ENCODE measurements at regions of chr10 and their contacts with region 1.

Region 1: DNA sequence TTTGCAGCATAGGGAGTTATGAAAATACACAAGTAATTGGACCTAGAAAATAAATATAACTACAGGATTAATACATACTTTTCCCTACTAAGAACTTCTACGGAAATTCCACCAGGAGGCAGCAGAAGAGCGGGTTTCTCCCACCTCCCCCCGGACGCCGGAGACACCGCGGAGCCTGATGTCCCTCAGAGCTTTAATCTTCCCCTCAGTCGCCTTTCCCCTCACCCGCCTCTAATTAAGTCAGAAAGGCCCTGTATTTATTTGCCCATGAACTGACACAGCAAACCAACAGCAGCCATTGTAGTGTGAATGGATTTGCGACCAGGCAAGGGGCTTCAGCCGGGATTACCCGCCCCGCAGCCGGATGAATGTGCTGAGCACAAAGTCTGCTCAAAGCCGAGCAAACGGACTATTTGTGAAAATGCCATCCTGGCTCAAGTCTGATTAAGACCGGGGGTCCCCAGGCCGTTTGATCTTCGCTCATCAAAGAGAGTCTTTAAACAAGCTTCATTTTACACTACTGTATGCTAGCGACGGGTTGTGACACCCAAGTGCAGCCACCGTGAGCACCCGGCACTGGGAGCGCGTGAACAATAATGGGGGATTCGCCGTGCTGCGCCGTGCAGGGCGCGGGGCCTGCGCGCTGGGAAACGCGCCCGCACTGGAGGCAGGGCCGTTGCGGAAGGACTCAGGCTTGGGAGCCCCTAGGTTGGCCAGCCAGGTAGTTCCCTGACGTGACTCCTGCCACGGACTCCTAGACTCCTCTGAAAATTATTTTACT is 5.6 kb upstream of the DKK1 start:
- DNase-seq: peak; percentile 35 to 66 (median 61)
- H3K4me3 ChIP-seq: peak overlapping the region in 2 of 4 donors; percentile 17 to 55
- H3K27ac ChIP-seq: no peak overlapping the region
- H3K4me1 ChIP-seq: peaks cover 0 to 11% of the 10 kb centered on the region in 2 donors
- H3K27me3 ChIP-seq: peaks cover 11% of the 10 kb centered on the region
- CTCF ChIP-seq: peak; percentile 54 to 80 (median 72)
- POLR2A ChIP-seq: no peak

Region 2: DNA sequence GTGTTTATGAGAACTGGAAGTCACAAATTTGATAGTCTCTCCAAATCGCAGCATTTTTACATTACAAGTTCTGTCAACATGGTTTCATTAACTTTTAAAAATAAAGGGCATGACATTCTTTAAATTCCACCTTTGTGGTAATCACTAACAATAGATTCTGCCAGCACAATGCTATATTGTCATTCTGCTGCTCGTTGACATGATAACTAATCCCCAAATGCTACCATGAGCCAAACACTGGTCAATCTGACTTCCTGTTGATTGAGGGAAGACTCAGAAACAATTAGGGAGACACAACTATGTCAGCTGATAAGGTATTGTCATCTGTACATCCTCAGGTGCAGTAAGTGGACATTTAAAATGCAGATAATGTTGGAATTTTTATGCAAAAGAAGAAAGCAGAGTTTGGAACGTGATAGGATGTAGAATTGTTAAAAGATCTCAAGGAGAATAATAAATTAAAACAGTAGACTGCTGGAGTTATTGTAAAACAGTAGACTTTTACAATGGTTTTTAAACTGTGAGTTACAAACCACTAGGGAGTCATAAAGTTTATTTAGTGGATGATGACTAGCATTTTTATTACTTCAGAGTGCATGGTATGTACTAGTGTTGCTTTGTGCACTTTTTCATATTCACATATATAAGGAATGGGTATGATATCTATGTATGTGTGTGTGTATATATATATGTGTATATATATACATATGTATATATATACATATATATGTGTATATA is 120.8 kb before region 1 on chr10:
- intact Hi-C with region 1: no loop called
- DNase-seq: no peak
- H3K4me3 ChIP-seq: no peak overlapping the region
- H3K27ac ChIP-seq: no peak overlapping the region
- H3K4me1 ChIP-seq: no peaks in the 10 kb centered on the region
- H3K27me3 ChIP-seq: no peaks in the 10 kb centered on the region
- CTCF ChIP-seq: no peak
- POLR2A ChIP-seq: no peak

Region 3: DNA sequence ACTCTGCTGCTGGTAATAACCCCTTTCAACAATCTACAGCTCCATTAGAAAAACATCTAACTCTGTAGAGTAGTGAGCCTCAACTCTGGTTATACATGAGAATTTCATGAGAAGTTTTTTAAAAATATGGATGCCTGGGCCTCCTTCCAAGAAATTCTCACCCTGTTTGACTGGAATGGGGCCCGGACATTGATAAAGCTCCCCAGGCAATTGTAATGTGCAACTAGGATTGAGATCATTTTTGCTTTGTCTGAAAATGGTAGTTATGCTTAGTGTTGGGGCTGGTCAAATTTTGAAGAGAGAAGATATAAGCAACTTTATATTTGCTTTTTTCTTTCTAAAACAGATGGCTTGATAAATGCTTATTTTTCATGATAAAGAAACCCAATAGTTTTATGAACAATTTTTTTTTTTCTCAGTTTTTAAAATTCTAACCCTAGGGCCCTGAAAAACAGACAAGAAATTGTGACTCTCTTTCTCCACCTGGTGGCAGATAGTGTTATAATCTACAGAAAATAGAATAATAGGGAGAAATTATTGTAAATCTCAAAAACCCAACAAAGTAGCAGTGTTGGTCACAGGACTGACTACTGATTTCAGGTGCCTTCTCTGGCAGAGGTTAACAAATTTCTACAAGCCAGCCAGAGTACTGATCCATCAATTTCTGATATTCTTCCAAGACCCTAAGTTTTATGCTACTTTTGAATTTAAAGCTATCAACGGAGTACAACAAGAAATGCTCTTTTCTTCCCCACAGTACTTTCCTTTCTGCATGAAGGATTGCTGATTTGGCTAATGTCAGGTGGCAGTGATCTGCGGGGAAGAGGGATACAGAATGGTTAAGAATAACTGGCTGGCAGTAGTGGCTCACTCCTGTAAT is 180.4 kb after region 1 on chr10:
- intact Hi-C with region 1: loop called (anchors 5 kb)
- DNase-seq: no peak
- H3K4me3 ChIP-seq: no peak overlapping the region
- H3K27ac ChIP-seq: no peak overlapping the region
- H3K4me1 ChIP-seq: no peaks in the 10 kb centered on the region
- H3K27me3 ChIP-seq: no peaks in the 10 kb centered on the region
- CTCF ChIP-seq: peak; percentile 50 to 70 (median 61)
- POLR2A ChIP-seq: no peak

Measured in adrenal gland (tissue), 19 donors.